ENCODE measurements at regions of chr1 and their contacts with region 1.

Region 1: DNA sequence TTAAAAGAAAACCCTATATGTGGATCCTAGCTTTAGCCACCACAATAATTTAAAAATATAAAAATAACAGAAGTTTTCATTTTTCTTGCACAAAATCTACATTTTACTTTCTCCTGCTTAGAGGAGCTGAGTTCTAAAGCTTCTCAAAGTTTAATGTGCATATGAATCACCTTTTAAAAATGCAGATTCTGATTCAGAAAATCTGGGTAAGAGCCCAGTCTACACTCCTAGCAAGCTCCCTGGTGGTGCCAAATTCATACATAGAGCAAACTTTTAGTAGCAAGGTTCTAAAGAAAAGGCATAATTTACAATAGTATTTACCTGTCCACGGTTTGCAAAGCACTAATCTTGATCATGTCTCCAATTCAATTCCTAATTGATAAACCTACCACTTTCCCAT is 19.3 kb downstream of the RSBN1 start:
- DNase-seq: no peak
- ATAC-seq: no peak
- H3K4me3 ChIP-seq: no peak overlapping the region
- H3K27ac ChIP-seq: no peak overlapping the region
- H3K4me1 ChIP-seq: peaks cover 0 to 6% of the 10 kb centered on the region in 2 experiments; a peak in 1 of 4 replicates
- H3K27me3 ChIP-seq: no peaks in the 10 kb centered on the region
- CTCF ChIP-seq: no peak
- POLR2A ChIP-seq: no peak
- RAD21 ChIP-seq: no peak

Region 2: DNA sequence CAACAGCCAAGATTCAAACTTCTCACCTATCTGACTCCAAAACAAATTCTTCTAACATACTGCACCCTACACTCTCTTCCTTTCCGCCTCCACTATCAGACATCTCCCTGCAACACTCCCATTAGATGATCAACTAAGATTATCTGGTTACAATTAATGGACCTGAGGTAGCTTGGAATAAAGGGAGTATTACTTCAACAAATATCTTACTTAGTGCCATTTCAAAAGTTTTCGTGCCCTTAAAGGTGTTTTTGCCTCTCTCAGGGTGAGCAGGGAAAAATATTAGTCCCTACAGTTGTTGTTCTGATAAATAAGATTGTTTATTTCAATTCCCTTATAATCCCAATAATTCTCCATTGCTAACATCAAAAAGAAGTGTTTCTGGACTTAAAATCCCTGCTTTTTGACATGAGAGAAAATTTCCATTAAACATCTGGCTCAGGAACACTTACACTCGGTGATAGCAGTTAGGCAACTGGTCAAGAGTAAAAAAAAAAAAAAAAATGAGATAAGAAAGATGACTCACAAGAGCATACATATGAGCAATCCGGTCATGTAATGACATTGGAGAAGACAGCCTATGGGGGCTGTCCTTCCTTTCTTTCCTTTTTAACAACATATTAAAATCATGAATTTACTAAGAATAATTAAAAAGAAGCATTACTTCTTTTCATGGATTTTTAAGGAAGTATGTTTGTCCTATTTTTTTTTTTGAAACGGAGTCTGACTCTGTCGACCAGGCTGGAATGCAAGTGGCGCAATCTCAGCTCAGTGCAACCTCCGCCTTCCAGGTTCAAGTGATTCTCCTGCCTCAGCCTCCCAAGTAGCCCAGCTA is 11.7 kb after region 1 on chr1:
- CTCF ChIA-PET with region 1: no interaction called
- POLR2A ChIA-PET with region 1: interaction called, 3 read pairs
- RAD21 ChIA-PET with region 1: no interaction called
- intact Hi-C with region 1: loop called (anchors 1 kb)
- DNase-seq: peak; percentile 56
- ATAC-seq: peak; percentile 83
- H3K4me3 ChIP-seq: no peak overlapping the region
- H3K27ac ChIP-seq: no peak overlapping the region
- H3K4me1 ChIP-seq: peaks cover 12 to 21% of the 10 kb centered on the region in 2 experiments
- H3K27me3 ChIP-seq: no peaks in the 10 kb centered on the region
- CTCF ChIP-seq: no peak
- POLR2A ChIP-seq: no peak
- RAD21 ChIP-seq: no peak